A549 (cell line): ENCODE measurements at regions of chr12 and their contacts with region 1.

Region 1: GRCh38 chr12:116880817-116881324 is 370 bp downstream of the HRK start:
- DNase-seq: peak; percentile 63 to 76
- ATAC-seq: peak; percentile 80
- H3K4me3 ChIP-seq: peak overlapping the region; percentile 47
- H3K27ac ChIP-seq: peak overlapping the region; percentile 68 to 87; a peak in 5 of 6 replicates
- H3K4me1 ChIP-seq: peaks cover 24% of the 10 kb centered on the region
- CTCF ChIP-seq: peak; percentile 35; the same call in 2 of the 3 replicates
- EP300 ChIP-seq: no peak
- POLR2A ChIP-seq: no peak
- RAD21 ChIP-seq: peak; percentile 14 to 27; a peak in 2 of 5 replicates

Region 2: GRCh38 chr12:116703214-116703795 is 177.6 kb before region 1 on chr12:
- CTCF ChIA-PET with region 1: interaction called, 16 read pairs
- POLR2A ChIA-PET with region 1: no interaction called
- DNase-seq: peak; percentile 77 to 80
- ATAC-seq: peak; percentile 93 to 94
- H3K4me3 ChIP-seq: no peak overlapping the region
- H3K27ac ChIP-seq: no peak overlapping the region
- H3K4me1 ChIP-seq: no peaks in the 10 kb centered on the region; the same call in 2 of the 3 replicates
- CTCF ChIP-seq: peak; percentile 95
- EP300 ChIP-seq: no peak
- POLR2A ChIP-seq: no peak
- RAD21 ChIP-seq: peak; percentile 88 to 91

Region 3: DNA sequence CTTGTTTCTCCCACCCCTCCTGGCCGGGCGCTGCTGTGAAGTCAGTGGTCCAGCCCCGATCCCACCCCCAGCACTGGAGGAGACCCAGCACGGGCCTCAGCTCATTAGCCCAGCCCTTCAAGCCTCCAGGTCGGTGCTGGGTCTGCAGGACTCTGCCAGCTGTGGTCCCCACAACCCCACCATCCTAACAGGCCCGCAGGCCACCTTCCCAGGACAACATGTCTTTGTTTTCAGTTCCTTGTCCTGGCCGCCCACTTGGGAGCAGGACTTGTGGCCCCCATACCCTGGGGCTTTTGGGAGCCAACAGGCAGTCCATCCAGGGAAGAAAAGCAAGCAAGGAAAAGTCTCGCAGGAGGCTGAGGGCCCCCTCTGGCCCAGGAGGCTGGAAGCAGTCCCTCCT is 59.6 kb before region 1 on chr12:
- CTCF ChIA-PET with region 1: interaction called, 22 read pairs
- POLR2A ChIA-PET with region 1: interaction called, 3 read pairs
- DNase-seq: no peak
- ATAC-seq: no peak
- H3K4me3 ChIP-seq: no peak overlapping the region
- H3K27ac ChIP-seq: no peak overlapping the region
- H3K4me1 ChIP-seq: peaks cover 9% of the 10 kb centered on the region
- CTCF ChIP-seq: no peak
- EP300 ChIP-seq: no peak
- POLR2A ChIP-seq: no peak
- RAD21 ChIP-seq: no peak

Region 4: DNA sequence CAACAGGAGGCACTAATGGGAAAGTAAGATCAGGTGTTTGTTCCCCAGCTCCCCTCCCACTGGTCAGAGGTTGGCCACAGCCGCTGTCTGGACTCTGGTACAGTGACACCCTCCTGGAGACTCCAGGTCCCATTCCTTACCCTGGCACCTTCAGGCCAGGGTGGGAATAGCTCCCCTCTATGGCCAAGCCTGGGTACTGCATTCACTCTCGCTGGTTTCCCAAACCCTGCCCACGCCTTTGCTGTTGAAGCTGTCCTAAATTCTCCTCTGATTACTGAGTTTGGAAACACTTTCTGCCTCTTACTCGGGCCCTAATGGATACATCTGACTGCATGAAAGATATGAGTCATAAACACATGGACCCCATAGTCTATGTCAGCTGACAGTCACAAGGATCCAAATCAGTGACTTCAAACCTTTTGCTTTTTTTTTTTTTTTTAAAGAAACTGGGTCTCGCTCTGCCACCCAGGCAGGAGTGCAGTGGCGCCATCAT is 17.6 kb before region 1 on chr12:
- CTCF ChIA-PET with region 1: interaction called, 20 read pairs
- POLR2A ChIA-PET with region 1: no interaction called
- DNase-seq: peak in 1 of 2 experiments; percentile 65
- ATAC-seq: peak; percentile 44 to 55; a peak in 4 of 6 replicates
- H3K4me3 ChIP-seq: no peak overlapping the region
- H3K27ac ChIP-seq: peak overlapping the region in 1 of 2 experiments; percentile 73; a peak in 2 of 6 replicates
- H3K4me1 ChIP-seq: peaks cover 46% of the 10 kb centered on the region
- CTCF ChIP-seq: peak; percentile 46
- EP300 ChIP-seq: no peak
- POLR2A ChIP-seq: no peak
- RAD21 ChIP-seq: 0 out of 5 replicates have a peak, but pooled peaks of 1 of the 2 experiments have one; percentile 25

Region 5: GRCh38 chr12:116891952-116892744 is 11.3 kb after region 1 on chr12:
- CTCF ChIA-PET with region 1: interaction called, 10 read pairs
- POLR2A ChIA-PET with region 1: no interaction called
- DNase-seq: peak in 1 of 2 experiments; percentile 50
- ATAC-seq: peak; percentile 83 to 88
- H3K4me3 ChIP-seq: no peak overlapping the region
- H3K27ac ChIP-seq: no peak overlapping the region
- H3K4me1 ChIP-seq: no peaks in the 10 kb centered on the region
- CTCF ChIP-seq: no peak
- EP300 ChIP-seq: no peak
- POLR2A ChIP-seq: no peak
- RAD21 ChIP-seq: no peak